Gastrocnemius medialis (tissue), 4 donors: ENCODE measurements at regions of chr2 and their contacts with region 1.

Region 1: DNA sequence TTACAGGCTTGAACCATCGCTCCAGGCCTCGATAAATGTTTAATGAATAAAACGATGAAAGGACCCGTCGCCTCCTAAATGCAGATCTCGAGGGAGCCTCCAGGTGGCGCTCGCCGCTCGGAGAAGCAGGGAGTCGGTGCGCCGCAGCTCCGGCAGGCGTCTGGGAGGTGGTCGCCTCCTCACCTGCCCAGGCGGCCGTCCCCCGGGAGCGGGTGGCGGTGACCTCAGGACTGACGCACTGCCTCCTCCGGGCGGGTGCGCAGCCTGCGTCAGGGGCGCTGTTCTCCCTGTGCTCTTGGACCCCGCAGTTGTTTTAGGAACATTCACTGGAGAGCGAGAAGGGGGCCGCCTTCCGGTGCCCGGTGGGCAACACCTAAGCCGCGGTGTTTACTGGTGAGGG is 38.6 kb upstream of the POLE4 start:
- DNase-seq: peak in 1 of 2 donors; percentile 26
- ATAC-seq: peak in 1 of 2 donors; percentile 36
- H3K4me3 ChIP-seq: peak overlapping the region; percentile 37 to 56 (median 40)
- H3K27ac ChIP-seq: no peak overlapping the region
- H3K4me1 ChIP-seq: peaks cover 0 to 7% of the 10 kb centered on the region in 2 donors
- H3K27me3 ChIP-seq: peaks cover 0 to 4% (median 0%) of the 10 kb centered on the region in 3 donors
- CTCF ChIP-seq: peak; percentile 57 to 89 (median 79)
- POLR2A ChIP-seq: no peak

Region 2: DNA sequence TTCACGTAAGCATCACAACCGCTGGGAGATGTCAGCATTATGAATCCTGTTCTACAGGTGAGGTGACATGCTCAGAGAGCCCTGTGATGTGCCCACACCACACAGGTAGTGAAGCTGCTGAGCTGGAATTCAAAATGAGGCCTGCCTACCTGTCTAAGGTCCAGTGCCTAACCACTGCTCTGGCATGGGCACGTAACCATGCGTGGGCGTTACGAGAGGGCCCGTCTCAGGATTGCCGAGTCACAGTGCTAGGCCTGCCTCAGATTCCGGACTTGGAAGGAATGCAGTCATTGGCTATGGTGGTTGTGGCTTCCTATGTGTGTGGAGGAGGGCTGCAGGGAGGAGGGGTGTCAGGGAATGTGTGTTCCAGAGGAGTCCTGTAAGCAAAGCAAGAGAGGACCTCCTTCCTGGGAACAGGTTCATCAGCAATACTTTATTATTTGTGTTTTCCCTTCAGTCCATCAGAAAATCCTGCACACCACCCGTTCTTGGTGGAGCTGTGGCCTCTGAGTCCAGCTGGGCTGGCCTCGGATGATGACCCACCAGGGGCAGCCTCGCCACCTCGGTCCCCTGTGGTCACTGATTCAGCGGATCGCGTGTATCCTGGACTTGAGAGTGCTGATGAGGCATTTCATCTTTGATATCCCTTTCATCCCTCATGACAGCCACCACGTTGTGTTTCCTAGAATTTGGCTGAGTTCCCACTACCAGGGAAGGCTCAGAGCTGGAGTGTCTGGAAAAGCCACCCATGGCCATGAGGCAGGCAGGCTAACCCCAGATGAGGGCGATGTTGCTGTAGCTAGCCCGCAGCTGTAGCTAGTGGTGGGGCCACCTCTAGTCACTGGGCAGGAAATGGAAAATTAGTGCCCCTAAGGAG is 54.7 kb before region 1 on chr2:
- in situ Hi-C with region 1: no loop called
- intact Hi-C with region 1: no loop called
- DNase-seq: peak; percentile 33 to 59
- ATAC-seq: peak; percentile 26 to 39
- H3K4me3 ChIP-seq: no peak overlapping the region
- H3K27ac ChIP-seq: peak overlapping the region; percentile 75 to 92 (median 88)
- H3K4me1 ChIP-seq: peaks cover 37 to 84% of the 10 kb centered on the region in 2 donors
- H3K27me3 ChIP-seq: no peaks in the 10 kb centered on the region
- CTCF ChIP-seq: no peak
- POLR2A ChIP-seq: peak in 1 of 2 donors; percentile 38

Region 3: GRCh38 chr2:75403991-75404428 is 484.2 kb after region 1 on chr2:
- in situ Hi-C with region 1: loop called in 3 of 4 experiments (anchors 5 to 10 kb)
- intact Hi-C with region 1: loop called (anchors 1 kb)
- DNase-seq: no peak
- ATAC-seq: peak in 1 of 2 donors; percentile 45
- H3K4me3 ChIP-seq: no peak overlapping the region
- H3K27ac ChIP-seq: no peak overlapping the region
- H3K4me1 ChIP-seq: no peaks in the 10 kb centered on the region
- H3K27me3 ChIP-seq: peaks cover 0 to 6% (median 0%) of the 10 kb centered on the region in 3 donors
- CTCF ChIP-seq: peak in 4 of 5 experiments; percentile 34 to 69 (median 61)
- POLR2A ChIP-seq: no peak

Region 4: GRCh38 chr2:75416420-75417342 is 496.9 kb after region 1 on chr2:
- in situ Hi-C with region 1: loop called in 1 of 4 experiments (anchors 10 kb)
- intact Hi-C with region 1: no loop called
- DNase-seq: no peak
- ATAC-seq: no peak
- H3K4me3 ChIP-seq: no peak overlapping the region
- H3K27ac ChIP-seq: no peak overlapping the region
- H3K4me1 ChIP-seq: no peaks in the 10 kb centered on the region
- H3K27me3 ChIP-seq: no peaks in the 10 kb centered on the region
- CTCF ChIP-seq: no peak
- POLR2A ChIP-seq: no peak

Region 5: DNA sequence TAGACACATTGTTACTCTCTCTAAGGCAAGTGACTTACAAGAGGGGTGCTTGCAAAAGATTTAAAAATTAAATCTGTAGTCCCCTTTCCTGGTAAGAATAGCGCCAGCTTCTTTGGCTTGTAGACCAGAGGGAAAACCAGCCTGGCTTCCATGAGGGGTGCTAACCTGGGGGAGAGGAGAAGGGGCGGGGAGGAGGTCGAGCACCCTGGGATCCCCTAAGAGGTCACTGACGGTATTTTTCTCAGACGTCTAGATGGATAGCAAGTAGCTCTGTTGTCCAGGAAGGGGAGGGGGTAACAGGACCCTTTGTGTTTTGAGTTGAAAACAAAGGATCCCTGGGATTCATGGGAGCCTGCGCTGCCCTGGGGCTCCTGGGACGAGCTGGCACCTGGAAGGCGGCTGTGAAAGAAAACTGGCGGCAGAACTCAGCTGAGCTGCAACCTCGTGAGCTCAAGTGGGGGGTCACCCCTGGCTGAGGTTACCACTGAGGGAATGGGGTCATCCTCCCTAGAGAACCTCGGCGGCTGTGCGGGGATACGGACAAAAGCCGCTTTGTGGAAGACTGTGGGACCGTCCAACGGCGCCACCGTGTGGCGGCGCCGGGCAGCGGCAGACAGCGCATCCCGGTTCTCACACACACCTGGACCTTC is 689.0 kb after region 1 on chr2:
- in situ Hi-C with region 1: loop called in 3 of 4 experiments (anchors 10 to 25 kb)
- intact Hi-C with region 1: loop called (anchors 5 kb)
- DNase-seq: peak in 1 of 2 donors; percentile 18
- ATAC-seq: peak; percentile 54 to 75
- H3K4me3 ChIP-seq: peak overlapping the region in 2 of 4 donors; percentile 4 to 13
- H3K27ac ChIP-seq: no peak overlapping the region
- H3K4me1 ChIP-seq: peaks cover 0 to 6% of the 10 kb centered on the region in 2 donors
- H3K27me3 ChIP-seq: peaks cover 5 to 17% (median 7%) of the 10 kb centered on the region in 3 donors
- CTCF ChIP-seq: peak; percentile 71 to 91 (median 79)
- POLR2A ChIP-seq: no peak